ENCODE measurements at regions of chr1 and their contacts with region 1.

Region 1: DNA sequence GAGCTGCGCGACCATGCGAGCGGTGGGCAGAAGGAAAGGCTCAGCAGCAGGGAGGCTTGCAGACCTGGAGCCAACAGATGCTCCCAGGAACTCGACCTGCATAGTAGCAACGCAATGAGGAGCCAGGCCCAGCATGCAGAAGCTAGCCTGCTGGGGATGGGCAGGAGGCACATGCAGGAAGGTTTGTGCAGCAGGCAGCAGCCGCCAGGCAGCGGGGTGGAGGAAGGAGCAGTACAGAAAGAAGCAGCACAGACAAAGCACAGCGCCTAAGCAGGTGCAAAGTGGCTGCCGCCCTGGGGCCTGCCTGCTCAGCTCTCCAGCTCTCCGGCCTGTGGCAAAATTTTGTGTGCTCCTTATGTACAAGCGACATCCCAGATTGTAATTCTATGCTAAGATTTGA is 213.5 kb upstream of the MAP1LC3C start:
- DNase-seq: peak; percentile 61
- ATAC-seq: peak; percentile 78
- H3K4me3 Mint-ChIP-seq: peak overlapping the region; percentile 35; the same call in 1 of the 2 replicates
- H3K27ac Mint-ChIP-seq: peak overlapping the region; percentile 91
- H3K4me1 Mint-ChIP-seq: peaks cover 65% of the 10 kb centered on the region
- H3K27me3 Mint-ChIP-seq: peaks cover 39% of the 10 kb centered on the region
- CTCF ChIP-seq: no peak

Region 2: DNA sequence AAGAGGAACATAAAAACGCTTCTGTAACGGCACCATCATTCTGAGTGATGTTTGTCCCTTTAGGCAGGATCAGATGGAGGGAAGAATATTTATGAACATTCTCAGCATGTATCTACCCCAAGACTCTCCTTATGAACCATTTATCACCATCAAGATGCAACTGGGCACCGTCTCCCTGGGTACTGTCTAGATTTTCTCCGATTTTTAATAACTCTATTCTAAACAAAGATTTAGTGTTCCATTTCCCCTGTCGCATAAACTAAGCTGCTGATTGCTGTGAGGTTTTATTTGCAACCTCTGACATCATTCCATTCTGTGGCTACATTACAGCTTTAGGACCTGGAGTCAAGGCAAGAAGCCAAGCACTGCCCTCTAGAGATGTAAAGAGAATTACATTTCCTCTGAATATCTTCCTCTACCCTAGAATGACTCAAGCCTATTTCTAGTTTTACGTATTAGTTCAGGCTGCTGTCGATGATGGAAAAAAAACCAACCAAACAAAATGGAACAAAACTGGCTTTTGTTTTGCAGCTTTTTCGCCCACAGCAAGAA is 83.4 kb before region 1 on chr1:
- CTCF ChIA-PET with region 1: no interaction called
- POLR2A ChIA-PET with region 1: no interaction called
- DNase-seq: no peak
- ATAC-seq: peak; percentile 98
- H3K4me3 Mint-ChIP-seq: no peak overlapping the region
- H3K27ac Mint-ChIP-seq: no peak overlapping the region
- H3K4me1 Mint-ChIP-seq: peaks cover 3% of the 10 kb centered on the region
- H3K27me3 Mint-ChIP-seq: no peaks in the 10 kb centered on the region
- CTCF ChIP-seq: no peak

Region 3: DNA sequence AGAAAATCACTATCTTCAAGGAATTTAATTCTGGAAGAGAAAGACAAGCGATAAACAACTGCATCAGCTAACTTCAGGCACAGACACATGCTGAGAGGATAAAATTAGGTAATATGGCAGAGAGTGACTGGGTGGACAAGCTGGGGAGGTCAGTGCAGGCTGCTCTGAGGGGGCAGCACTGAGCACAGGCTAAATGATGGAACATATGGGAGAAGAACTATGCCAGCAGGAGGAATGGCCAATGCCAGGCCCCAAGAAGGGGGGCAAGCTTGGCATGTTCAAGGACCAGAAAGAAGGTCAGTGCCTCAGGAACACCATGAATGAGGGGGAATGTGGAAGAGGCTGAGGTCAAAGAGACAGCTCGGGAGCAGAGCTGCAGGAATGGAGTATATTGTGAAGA is 22.8 kb before region 1 on chr1:
- CTCF ChIA-PET with region 1: interaction called, 12 read pairs
- POLR2A ChIA-PET with region 1: no interaction called
- DNase-seq: peak; percentile 39
- ATAC-seq: peak; percentile 83
- H3K4me3 Mint-ChIP-seq: no peak overlapping the region
- H3K27ac Mint-ChIP-seq: no peak overlapping the region
- H3K4me1 Mint-ChIP-seq: peaks cover 18% of the 10 kb centered on the region
- H3K27me3 Mint-ChIP-seq: no peaks in the 10 kb centered on the region
- CTCF ChIP-seq: no peak

Region 4: GRCh38 chr1:242199776-242200458 is 12.5 kb before region 1 on chr1:
- CTCF ChIA-PET with region 1: no interaction called
- POLR2A ChIA-PET with region 1: no interaction called
- DNase-seq: no peak
- ATAC-seq: no peak
- H3K4me3 Mint-ChIP-seq: no peak overlapping the region
- H3K27ac Mint-ChIP-seq: peak overlapping the region; percentile 39; the same call in 1 of the 2 replicates
- H3K4me1 Mint-ChIP-seq: peaks cover 43% of the 10 kb centered on the region
- H3K27me3 Mint-ChIP-seq: no peaks in the 10 kb centered on the region
- CTCF ChIP-seq: no peak